Activated B cell treated with CpG ODN at 0.5 μM for 24 hours (primary cell): ENCODE measurements at regions of chr1 and their contacts with region 1.

Region 1: GRCh38 chr1:108559215-108560186 is at the start of gene EEIG2:
- DNase-seq: peak; percentile 90
- ATAC-seq: peak; percentile 88
- H3K4me3 Mint-ChIP-seq: peak within 1 kb of the TSS; percentile 93
- H3K27ac Mint-ChIP-seq: peak within 1 kb of the TSS; percentile 90
- H3K4me1 Mint-ChIP-seq: peaks cover 24% of the 10 kb centered on the region
- H3K27me3 Mint-ChIP-seq: no peaks in the 10 kb centered on the region
- CTCF ChIP-seq: no peak
- total RNA-seq, gene EEIG2: 7.0 and 7.1 TPM in 2 replicates

Region 2: GRCh38 chr1:107450899-107451664 is 1108.4 kb before region 1 on chr1:
- CTCF ChIA-PET with region 1: no interaction called
- POLR2A ChIA-PET with region 1: no interaction called
- intact Hi-C with region 1: loop called (anchors 10 kb)
- DNase-seq: no peak
- ATAC-seq: peak; percentile 74
- H3K4me3 Mint-ChIP-seq: peak overlapping the region; percentile 75
- H3K27ac Mint-ChIP-seq: peak overlapping the region; percentile 97
- H3K4me1 Mint-ChIP-seq: peaks cover 87% of the 10 kb centered on the region
- H3K27me3 Mint-ChIP-seq: no peaks in the 10 kb centered on the region
- CTCF ChIP-seq: no peak

Region 3: GRCh38 chr1:107963601-107964335 is 595.7 kb before region 1 on chr1:
- CTCF ChIA-PET with region 1: no interaction called
- POLR2A ChIA-PET with region 1: no interaction called
- intact Hi-C with region 1: loop called (anchors 10 kb)
- DNase-seq: peak; percentile 70
- ATAC-seq: peak; percentile 62
- H3K4me3 Mint-ChIP-seq: peak overlapping the region; percentile 93
- H3K27ac Mint-ChIP-seq: peak overlapping the region; percentile 99
- H3K4me1 Mint-ChIP-seq: peaks cover 61% of the 10 kb centered on the region
- H3K27me3 Mint-ChIP-seq: no peaks in the 10 kb centered on the region
- CTCF ChIP-seq: no peak

Region 4: GRCh38 chr1:108345787-108346517 is 213.5 kb before region 1 on chr1:
- CTCF ChIA-PET with region 1: no interaction called
- POLR2A ChIA-PET with region 1: no interaction called
- intact Hi-C with region 1: no loop called
- DNase-seq: no peak
- ATAC-seq: no peak
- H3K4me3 Mint-ChIP-seq: no peak overlapping the region
- H3K27ac Mint-ChIP-seq: no peak overlapping the region
- H3K4me1 Mint-ChIP-seq: no peaks in the 10 kb centered on the region
- H3K27me3 Mint-ChIP-seq: peaks cover 7% of the 10 kb centered on the region
- CTCF ChIP-seq: no peak

Region 5: DNA sequence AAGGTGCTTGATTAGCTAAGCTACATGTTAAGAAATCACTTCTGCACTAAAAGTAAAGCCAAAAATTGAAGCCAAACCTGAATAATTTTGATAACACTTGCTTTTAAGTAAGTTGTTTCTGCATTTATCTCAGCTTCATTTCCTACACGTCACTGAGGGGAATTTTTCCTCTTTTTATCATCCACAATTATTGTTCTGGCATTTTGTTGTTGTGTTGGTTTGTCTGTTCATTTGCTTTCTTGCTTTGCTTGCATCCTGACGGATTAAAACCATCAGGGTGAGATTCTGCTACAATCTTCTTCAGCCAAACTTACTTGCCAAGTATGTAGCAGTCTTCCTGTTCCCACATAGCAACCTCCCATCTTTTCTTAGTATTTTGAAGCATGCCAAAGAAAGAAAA is 17.6 kb before region 1 on chr1:
- CTCF ChIA-PET with region 1: interaction called, 8 read pairs
- POLR2A ChIA-PET with region 1: interaction called, 3 read pairs
- intact Hi-C with region 1: loop called (anchors 2 kb)
- DNase-seq: no peak
- ATAC-seq: no peak
- H3K4me3 Mint-ChIP-seq: no peak overlapping the region
- H3K27ac Mint-ChIP-seq: no peak overlapping the region
- H3K4me1 Mint-ChIP-seq: peaks cover 3% of the 10 kb centered on the region
- H3K27me3 Mint-ChIP-seq: peaks cover 4% of the 10 kb centered on the region
- CTCF ChIP-seq: no peak

Region 6: DNA sequence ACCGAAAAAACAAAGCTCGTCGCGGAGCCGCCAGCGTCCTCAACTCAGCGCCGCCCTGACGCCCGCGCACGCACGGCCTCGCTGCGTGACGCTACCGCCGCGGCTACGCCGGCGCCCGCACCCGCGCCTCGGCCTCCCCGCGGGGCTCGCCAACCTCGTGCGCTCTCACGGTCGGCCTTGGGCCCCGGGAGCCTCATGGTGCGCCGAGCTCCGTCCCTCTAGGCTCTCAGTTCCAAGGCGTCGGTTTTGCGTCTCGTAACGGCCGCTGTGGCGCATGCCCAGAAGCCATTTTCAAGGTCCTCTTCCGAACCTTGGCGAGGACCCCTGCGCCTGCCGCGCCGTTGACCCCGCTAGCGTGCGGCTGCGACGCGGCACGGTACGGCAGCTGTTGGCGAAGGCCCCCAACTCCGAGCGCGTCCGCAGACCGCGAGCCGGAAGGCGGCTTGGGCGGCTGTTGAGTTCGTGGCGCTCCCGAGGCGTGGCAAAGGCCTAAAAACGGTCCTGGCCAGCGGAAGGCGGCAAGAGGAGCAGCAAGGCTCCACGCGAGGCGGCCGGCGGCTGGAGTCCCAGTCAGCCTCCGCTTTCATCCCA is 101.6 kb after region 1 on chr1 and contains the start of gene HENMT1:
- CTCF ChIA-PET with region 1: interaction called, 5 read pairs
- POLR2A ChIA-PET with region 1: interaction called, 27 read pairs
- intact Hi-C with region 1: loop called (anchors 2 kb)
- DNase-seq: peak; percentile 75
- ATAC-seq: peak; percentile 82
- H3K4me3 Mint-ChIP-seq: peak within 1 kb of the TSS; percentile 86
- H3K27ac Mint-ChIP-seq: peak within 1 kb of the TSS; percentile 90
- H3K4me1 Mint-ChIP-seq: peaks cover 12% of the 10 kb centered on the region
- H3K27me3 Mint-ChIP-seq: no peaks in the 10 kb centered on the region
- CTCF ChIP-seq: no peak
- total RNA-seq, gene HENMT1: 6.1 and 6.4 TPM in 2 replicates

Region 7: DNA sequence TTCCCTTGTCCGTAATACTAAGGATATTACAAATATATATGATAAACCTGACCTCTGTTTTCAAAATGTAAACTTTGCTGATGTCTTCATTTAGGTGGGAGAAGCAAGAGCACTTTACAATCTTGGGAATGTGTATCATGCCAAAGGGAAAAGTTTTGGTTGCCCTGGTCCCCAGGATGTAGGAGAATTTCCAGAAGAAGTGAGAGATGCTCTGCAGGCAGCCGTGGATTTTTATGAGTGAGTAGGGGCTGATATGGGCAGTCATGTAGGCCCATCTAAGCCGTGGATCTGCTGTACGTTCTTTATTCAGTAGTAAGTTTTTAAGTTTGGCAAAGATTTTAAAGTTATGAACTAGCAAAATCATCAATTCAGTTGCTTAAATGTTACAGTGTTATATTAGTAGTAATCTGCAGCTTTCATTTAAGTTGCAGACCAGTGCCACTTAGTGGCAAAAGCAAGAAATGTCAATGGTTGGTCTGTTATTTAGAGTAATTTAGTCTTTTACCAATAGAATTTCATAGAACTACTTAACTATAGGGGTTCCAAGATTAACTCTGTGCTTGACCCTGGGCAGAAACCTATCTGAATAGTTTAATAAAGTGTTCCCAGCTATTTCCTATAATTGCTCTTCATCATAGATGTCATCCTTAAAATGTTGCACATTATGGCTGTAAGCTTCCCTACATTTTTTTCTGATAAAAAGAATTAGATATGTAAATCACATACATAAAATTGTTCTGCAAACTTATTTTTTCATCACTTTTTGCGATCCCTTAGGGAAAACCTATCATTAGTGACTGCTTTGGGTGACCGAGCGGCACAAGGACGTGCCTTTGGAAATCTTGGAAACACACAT is 338.6 kb after region 1 on chr1:
- CTCF ChIA-PET with region 1: interaction called, 3 read pairs
- POLR2A ChIA-PET with region 1: no interaction called
- intact Hi-C with region 1: loop called (anchors 1 kb)
- DNase-seq: no peak
- ATAC-seq: peak; percentile 66
- H3K4me3 Mint-ChIP-seq: no peak overlapping the region
- H3K27ac Mint-ChIP-seq: no peak overlapping the region
- H3K4me1 Mint-ChIP-seq: no peaks in the 10 kb centered on the region
- H3K27me3 Mint-ChIP-seq: no peaks in the 10 kb centered on the region
- CTCF ChIP-seq: peak; percentile 36